HCT116 (cell line): ENCODE measurements at regions of chrX and their contacts with region 1.

Region 1: DNA sequence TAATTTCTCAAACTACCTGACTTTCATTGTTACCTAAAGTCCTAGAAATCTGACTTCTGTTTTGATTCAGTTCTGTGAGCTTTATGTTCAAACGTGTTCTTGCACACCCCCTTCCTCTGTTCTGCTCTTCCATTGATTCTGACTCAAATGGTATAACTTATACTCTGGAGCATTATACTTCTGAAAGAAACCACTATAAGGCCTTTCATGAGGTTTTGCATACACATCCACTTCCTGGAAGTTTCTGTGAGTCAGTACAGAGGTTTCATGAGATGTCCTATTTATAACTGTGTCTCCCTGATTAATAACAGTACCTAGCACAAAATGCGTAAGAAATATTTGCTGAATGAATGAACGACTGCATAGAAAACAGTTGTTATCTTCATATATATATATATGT is 540.2 kb upstream of the CT83 start:
- DNase-seq: no peak
- ATAC-seq: no peak
- H3K4me3 ChIP-seq: no peak overlapping the region
- H3K27ac ChIP-seq: no peak overlapping the region
- H3K4me1 ChIP-seq: no peaks in the 10 kb centered on the region
- H3K27me3 ChIP-seq: no peaks in the 10 kb centered on the region
- CTCF ChIP-seq: no peak
- POLR2A ChIP-seq: no peak
- RAD21 ChIP-seq: no peak

Region 2: GRCh38 chrX:117053260-117053659 is 50.3 kb after region 1 on chrX:
- CTCF ChIA-PET with region 1: no interaction called
- POLR2A ChIA-PET with region 1: no interaction called
- RAD21 ChIA-PET with region 1: no interaction called
- intact Hi-C with region 1: loop called (anchors 5 kb)
- DNase-seq: no peak
- ATAC-seq: no peak
- H3K4me3 ChIP-seq: no peak overlapping the region
- H3K27ac ChIP-seq: no peak overlapping the region
- H3K4me1 ChIP-seq: no peaks in the 10 kb centered on the region
- H3K27me3 ChIP-seq: no peaks in the 10 kb centered on the region
- CTCF ChIP-seq: no peak
- POLR2A ChIP-seq: no peak
- RAD21 ChIP-seq: no peak